Transverse colon (tissue), 4 donors: ENCODE measurements at regions of chr15 and their contacts with region 1.

Region 1: GRCh38 chr15:28913171-28913765 is 27.5 kb downstream of the APBA2 start:
- DNase-seq: no peak
- H3K4me3 ChIP-seq: no peak overlapping the region
- H3K27ac ChIP-seq: no peak overlapping the region
- H3K4me1 ChIP-seq: no peaks in the 10 kb centered on the region
- H3K27me3 ChIP-seq: no peaks in the 10 kb centered on the region
- CTCF ChIP-seq: no peak
- EP300 ChIP-seq: no peak
- POLR2A ChIP-seq: no peak

Region 2: GRCh38 chr15:28991236-28992171 is 78.2 kb after region 1 on chr15:
- in situ Hi-C with region 1: no loop called
- intact Hi-C with region 1: loop called (anchors 1 kb)
- DNase-seq: no peak
- H3K4me3 ChIP-seq: no peak overlapping the region
- H3K27ac ChIP-seq: no peak overlapping the region
- H3K4me1 ChIP-seq: no peaks in the 10 kb centered on the region
- H3K27me3 ChIP-seq: no peaks in the 10 kb centered on the region
- CTCF ChIP-seq: no peak
- EP300 ChIP-seq: no peak
- POLR2A ChIP-seq: no peak

Region 3: DNA sequence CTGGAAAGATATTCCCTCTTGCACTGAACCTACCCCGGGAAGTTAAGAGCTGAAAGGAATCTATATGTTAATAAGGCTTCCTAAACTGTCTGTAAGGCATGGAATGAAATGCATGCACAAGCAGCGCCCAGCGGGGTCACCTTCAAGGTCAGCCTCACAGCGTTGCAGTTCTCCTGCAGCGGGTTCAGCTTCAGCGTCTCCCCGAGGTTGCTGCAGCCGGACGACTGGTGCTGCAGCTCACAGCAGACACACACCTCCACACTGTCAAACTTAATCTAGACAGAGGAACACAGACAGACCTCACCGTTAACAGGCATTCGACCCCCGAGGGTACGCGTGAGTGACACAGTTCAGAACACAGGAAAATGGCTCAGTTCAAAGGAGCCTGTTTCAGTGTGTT is 283.0 kb after region 1 on chr15:
- in situ Hi-C with region 1: no loop called
- intact Hi-C with region 1: no loop called
- DNase-seq: no peak
- H3K4me3 ChIP-seq: no peak overlapping the region
- H3K27ac ChIP-seq: no peak overlapping the region
- H3K4me1 ChIP-seq: no peaks in the 10 kb centered on the region
- H3K27me3 ChIP-seq: no peaks in the 10 kb centered on the region
- CTCF ChIP-seq: no peak
- EP300 ChIP-seq: no peak
- POLR2A ChIP-seq: no peak